H1 (cell line): ENCODE measurements at regions of chr19 and their contacts with region 1.

Region 1: GRCh38 chr19:7595466-7596133 is at the start of gene CAMSAP3:
- DNase-seq: peak; percentile 31 to 91
- H3K4me3 ChIP-seq: peak within 1 kb of the TSS; percentile 47 to 96 (median 65)
- H3K27ac ChIP-seq: no peak within 1 kb of the TSS
- H3K4me1 ChIP-seq: peaks cover 0 to 11% (median 6%) of the 10 kb centered on the region in 4 experiments; a peak in 5 of 7 replicates
- H3K27me3 ChIP-seq: no peaks in the 10 kb centered on the region
- CTCF ChIP-seq: no peak
- EP300 ChIP-seq: no peak
- POLR2A ChIP-seq: no peak
- RAD21 ChIP-seq: no peak
- total RNA-seq, gene CAMSAP3: 30.4 and 32.5 TPM in 2 replicates

Region 2: GRCh38 chr19:7605490-7606222 is 10.1 kb after region 1 on chr19:
- CTCF ChIA-PET with region 1: interaction called, 8 read pairs
- POLR2A ChIA-PET with region 1: interaction called, 10 read pairs
- DNase-seq: peak; percentile 65 to 86
- H3K4me3 ChIP-seq: no peak overlapping the region
- H3K27ac ChIP-seq: no peak overlapping the region
- H3K4me1 ChIP-seq: no peaks in the 10 kb centered on the region; a peak in 3 of 7 replicates
- H3K27me3 ChIP-seq: no peaks in the 10 kb centered on the region
- CTCF ChIP-seq: no peak
- EP300 ChIP-seq: no peak
- POLR2A ChIP-seq: no peak
- RAD21 ChIP-seq: no peak